AG04449 (cell line): ENCODE measurements at regions of chr6 and their contacts with region 1.

Region 1: DNA sequence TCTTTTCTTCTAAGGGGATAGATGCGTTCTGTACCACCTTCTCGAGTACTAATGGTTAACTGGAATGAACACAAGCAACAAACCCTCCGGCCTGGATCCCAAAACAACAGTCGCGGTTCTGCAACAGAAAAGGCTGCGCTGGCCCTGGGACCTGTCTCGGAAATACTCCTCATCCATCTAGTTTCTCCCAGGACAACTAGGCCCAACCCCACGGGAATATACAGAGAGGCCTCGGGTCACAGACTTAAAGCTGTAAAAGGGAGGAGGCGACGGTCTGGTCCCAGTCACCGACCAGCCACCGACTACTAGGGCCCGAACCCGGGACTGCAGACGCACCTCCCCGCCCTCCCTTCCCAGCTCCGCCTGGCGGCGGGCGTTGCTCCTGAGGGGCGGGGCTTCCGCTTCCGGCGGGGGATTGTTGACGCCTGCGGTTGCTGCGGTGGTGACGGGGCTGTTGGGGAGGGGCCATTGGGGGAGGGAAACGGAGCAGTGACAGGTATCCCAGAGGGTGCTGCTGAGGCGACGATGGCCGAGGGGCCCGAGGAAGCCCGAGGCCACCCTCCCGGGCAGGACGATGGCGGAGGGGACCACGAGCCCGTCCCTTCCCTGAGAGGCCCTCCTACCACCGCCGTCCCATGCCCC is at the start of gene FAM8A1:
- DNase-seq: no peak
- H3K4me3 ChIP-seq: peak within 1 kb of the TSS; percentile 91
- CTCF ChIP-seq: peak; percentile 73

Region 2: GRCh38 chr6:17584241-17584803 is 15.7 kb before region 1 on chr6:
- CTCF ChIA-PET with region 1: interaction called, 20 read pairs
- POLR2A ChIA-PET with region 1: no interaction called
- DNase-seq: no peak
- H3K4me3 ChIP-seq: no peak overlapping the region; the same call in 1 of the 2 replicates
- CTCF ChIP-seq: peak; percentile 68

Region 3: GRCh38 chr6:17589406-17590096 is 10.5 kb before region 1 on chr6:
- CTCF ChIA-PET with region 1: interaction called, 20 read pairs
- POLR2A ChIA-PET with region 1: no interaction called
- DNase-seq: no peak
- H3K4me3 ChIP-seq: no peak overlapping the region
- CTCF ChIP-seq: peak; percentile 8

Region 4: DNA sequence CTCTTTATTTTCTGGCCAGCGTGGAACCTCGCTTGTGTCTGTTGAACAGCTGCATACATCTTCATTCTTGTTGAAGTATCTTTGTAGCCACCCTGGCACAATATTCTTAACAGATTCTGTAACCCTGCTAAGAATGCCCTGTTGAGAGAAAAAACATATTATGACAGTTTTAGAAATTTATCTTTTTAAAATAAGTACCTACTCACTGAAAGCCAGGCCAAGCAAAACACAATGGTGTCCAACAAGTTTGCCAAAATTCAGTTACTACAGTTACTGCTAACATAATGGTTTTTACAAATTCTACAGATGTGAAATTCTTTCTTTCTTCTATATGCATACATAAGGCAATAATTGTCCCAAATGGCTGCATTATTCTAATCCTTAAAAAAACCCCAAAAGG is 88.5 kb after region 1 on chr6:
- CTCF ChIA-PET with region 1: no interaction called
- POLR2A ChIA-PET with region 1: no interaction called
- DNase-seq: no peak
- H3K4me3 ChIP-seq: no peak overlapping the region
- CTCF ChIP-seq: no peak